Right lobe of liver (tissue), 6 donors: ENCODE measurements at regions of chr5 and their contacts with region 1.

Region 1: GRCh38 chr5:98905857-98906690 is 22.7 kb downstream of the CHD1 start:
- DNase-seq: no peak
- ATAC-seq: peak; percentile 60 to 86 (median 76)
- H3K4me3 ChIP-seq: no peak overlapping the region
- H3K27ac ChIP-seq: no peak overlapping the region
- H3K4me1 ChIP-seq: no peaks in the 10 kb centered on the region
- H3K27me3 ChIP-seq: no peaks in the 10 kb centered on the region
- CTCF ChIP-seq: peak; percentile 67 to 83 (median 73)
- POLR2A ChIP-seq: no peak

Region 2: DNA sequence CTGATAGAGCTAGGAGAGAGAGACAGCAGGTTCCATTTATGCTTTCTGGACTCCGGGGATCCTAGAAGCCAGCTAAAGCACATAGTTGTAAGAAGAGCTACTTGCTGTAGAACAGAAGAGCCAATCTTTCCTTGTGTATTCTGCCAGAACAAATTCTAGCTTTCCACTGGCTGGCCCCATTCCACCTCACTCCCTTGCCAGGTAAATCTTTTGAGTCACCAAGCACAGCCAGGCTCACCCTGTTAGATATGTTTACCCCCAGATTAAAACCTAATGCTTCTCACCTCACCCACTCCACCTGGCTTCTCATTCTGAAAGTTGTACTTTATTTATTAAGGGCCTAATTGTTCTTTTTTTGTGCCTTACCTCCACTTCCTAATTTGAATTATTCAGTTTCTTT is 71.6 kb after region 1 on chr5:
- intact Hi-C with region 1: no loop called
- DNase-seq: peak in 2 of 3 donors; percentile 44 to 77
- ATAC-seq: peak; percentile 80 to 99 (median 90)
- H3K4me3 ChIP-seq: no peak overlapping the region
- H3K27ac ChIP-seq: no peak overlapping the region
- H3K4me1 ChIP-seq: peaks cover 0 to under 1% (median 0%) of the 10 kb centered on the region in 4 donors
- H3K27me3 ChIP-seq: no peaks in the 10 kb centered on the region
- CTCF ChIP-seq: no peak
- POLR2A ChIP-seq: no peak

Region 3: DNA sequence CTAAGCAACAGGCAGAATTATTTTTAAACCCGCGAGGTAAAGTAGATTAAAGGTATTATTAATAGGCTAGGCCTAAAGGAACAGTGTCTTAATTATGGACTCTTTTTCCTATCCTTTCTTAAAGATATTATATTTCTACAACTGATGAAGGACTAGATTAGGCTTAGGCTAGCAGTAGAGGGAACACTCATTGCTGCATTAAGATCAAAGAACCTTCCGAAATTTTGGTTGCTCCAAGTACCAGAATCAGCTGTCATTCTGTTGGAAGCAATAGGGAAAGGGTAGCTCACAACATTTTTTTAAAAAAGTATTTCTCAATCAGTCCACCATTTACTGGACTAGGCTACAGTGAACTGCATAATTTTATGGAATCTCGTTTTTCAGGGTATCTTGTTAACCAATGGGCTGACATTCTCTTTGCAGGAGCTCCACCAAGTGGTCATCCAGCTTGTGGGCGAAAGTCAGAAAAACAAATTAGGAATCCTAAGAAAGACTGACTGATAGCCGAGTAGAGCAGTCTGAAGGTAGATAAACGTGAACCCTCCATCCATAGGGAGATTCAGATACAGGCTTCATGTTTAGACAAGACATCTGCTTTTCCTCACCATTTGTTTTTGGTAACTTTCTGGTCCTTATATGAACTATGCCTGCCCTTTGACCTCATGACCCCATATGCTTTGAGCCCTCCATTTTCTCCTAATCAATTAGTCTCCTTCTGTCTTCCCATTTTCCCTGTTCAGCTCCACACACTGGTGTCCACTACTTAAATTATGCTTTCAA is 126.3 kb after region 1 on chr5:
- intact Hi-C with region 1: loop called in 1 of 2 experiments (anchors 10 kb)
- DNase-seq: peak in 1 of 3 donors; percentile 72
- ATAC-seq: peak; percentile 92 to 97 (median 94)
- H3K4me3 ChIP-seq: peak overlapping the region; percentile 12 to 56 (median 53)
- H3K27ac ChIP-seq: peak overlapping the region; percentile 65 to 89 (median 66)
- H3K4me1 ChIP-seq: no peaks in the 10 kb centered on the region
- H3K27me3 ChIP-seq: no peaks in the 10 kb centered on the region
- CTCF ChIP-seq: peak; percentile 74 to 90 (median 81)
- POLR2A ChIP-seq: no peak

Region 4: GRCh38 chr5:99060306-99061261 is 154.5 kb after region 1 on chr5:
- intact Hi-C with region 1: loop called in 1 of 2 experiments (anchors 5 kb)
- DNase-seq: peak; percentile 74 to 79 (median 75)
- ATAC-seq: peak; percentile 78 to 88 (median 86)
- H3K4me3 ChIP-seq: no peak overlapping the region
- H3K27ac ChIP-seq: no peak overlapping the region
- H3K4me1 ChIP-seq: peaks cover 0 to 6% (median 0%) of the 10 kb centered on the region in 4 donors
- H3K27me3 ChIP-seq: no peaks in the 10 kb centered on the region
- CTCF ChIP-seq: peak; percentile 87 to 95 (median 91)
- POLR2A ChIP-seq: no peak